Posterior cingulate gyrus (tissue), 11 donors: ENCODE measurements at regions of chr1 and their contacts with region 1.

Region 1: DNA sequence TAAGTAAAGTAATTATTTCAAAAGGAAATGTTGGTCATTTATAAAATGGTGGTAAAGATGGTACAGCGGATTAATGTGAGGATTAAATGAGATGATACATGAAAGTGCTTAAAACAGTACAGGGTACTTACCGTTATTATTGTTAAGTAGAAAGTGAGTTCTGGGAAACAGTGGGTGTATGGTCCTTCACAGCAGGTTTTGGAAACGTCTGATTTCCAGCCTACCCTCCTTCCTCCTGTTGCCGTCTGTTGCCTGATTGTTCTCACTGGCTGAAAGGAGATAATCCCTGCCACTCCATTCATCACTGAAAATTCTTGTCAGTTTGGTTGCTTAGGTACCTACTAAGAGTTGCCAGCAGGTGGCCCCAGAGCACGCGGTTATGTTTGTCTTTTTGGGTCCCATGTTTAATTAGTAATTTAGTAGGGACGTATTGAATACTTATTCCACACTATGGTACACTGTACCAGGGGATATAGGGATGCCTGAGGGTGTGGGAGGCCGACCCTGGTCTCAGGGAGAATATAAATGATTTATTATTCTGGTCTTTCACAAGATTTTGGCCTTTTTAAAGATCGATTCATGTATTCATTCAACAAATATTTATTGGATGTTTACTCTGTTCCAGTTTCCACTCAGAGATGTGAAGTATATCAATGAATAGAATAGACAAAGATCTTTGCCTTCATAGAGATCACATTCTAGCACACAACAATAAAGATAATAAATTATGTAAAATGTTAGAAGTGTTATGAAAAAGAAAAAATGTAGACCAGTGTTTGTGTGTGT is 30.8 kb upstream of the RPTN start:
- DNase-seq: peak in 7 of 10 donors; percentile 43 to 88 (median 55)

Region 2: GRCh38 chr1:152141974-152142584 is 47.8 kb before region 1 on chr1:
- intact Hi-C with region 1: loop called (anchors 1 kb)
- DNase-seq: peak in 4 of 10 donors; percentile 32 to 54 (median 50)

Region 3: DNA sequence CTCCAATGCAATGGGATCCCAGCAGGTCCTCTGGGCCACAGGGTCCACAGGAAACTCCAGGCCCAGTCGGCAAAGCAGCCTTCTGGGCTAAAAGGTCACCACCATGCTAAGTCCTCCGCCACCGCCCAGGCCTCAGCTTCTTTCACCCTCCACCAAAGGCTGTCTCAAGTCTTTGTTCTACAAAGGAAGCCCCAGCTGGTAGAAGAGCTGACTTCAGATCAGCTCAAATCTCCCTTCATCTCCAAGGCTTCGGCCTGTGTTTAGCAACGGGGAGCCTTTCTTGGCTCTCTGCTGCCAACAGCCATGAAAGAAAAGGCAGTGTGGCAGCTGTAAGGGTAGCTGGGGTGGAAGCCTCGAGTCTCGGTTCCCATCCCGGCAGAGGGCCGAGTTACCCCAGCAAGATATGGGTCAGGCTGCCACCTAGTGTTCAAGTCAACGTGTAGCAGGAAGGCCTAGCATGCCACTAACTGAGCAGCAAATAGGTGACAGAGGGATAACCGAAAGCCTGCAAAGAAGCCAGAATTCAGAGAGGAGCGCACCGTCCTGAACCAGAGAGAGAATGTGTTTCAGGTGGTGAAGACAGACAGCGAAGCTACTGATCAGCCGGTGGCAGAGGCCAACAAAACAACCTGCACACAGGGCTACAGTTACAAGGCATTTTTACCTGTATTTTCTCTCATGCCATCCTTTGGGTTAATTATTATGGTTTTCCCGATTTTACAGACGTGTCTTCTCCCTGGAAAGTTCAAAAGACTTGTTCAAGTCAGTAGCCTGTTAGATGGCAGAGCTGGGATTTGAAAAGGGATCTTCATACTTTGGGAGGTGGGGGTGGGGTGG is 251.0 kb after region 1 on chr1:
- intact Hi-C with region 1: loop called (anchors 1 kb)
- DNase-seq: peak; percentile 39 to 92 (median 62)

Region 4: DNA sequence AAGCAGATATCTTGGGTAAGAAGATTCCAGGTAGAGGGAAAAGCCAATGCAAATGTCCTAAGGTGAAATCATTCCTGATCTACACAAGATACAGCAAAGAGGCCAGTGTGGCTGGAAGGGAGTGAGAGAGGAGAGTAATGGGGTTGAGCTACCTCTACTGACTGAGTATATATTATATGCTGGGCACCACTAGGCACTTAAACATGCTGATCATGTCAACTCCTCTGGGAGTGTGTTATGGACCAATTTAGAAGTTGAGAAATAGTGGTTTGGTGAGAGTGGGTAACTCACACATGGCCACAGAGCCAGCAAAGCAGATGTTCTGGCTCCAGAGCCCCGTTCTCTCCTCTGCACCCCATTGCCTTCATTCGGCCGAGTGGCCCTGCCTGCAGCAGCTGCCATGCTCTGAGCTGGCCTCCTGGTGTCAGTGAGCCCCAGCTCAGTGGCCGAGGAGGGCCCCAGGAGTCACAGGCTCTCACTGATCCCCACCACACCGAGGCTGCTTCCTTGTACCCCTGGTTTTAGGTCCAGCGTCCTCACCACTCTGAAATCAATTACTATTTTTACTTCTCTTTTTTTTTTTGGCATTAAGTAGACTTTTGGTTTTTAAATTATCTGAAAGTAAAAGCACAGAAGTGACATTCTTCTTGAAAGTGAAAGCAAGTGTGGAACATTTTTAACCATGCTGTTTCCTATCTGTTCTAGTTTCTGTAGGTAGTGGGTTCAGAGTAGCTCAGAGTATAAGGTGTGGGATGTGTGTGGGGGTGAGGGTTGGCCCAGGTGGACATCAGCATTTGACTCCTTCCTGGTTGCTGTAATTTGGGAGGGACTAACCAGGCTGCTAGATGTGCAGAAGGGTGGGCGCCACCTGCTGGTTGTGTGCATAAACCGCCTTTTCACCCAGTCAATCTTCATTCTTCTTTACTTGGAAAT is 270.0 kb after region 1 on chr1:
- intact Hi-C with region 1: loop called (anchors 1 kb)
- DNase-seq: peak in 9 of 10 donors; percentile 34 to 92 (median 74)